ENCODE measurements at regions of chr11 and their contacts with region 1.

Region 1: DNA sequence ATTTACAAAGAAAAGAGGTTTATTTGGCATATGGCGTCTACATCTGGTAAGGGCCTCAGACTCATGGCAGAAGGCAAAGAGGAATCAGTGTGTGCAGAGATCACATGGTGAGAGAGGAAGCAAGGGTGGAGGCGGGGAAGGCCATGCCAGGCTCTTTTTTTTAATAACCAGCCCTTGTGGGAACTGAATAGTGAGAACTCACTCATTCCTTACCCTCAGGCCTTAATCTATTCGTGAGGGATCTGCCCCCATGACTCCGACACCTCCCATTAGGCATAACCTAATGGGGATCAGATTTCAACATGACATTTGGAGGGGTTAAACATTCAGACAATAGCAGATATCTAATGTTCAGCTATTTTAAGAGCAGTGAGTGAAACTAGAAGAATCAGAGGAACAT is 55.7 kb downstream of the ATM start:
- DNase-seq: no peak
- H3K4me3 ChIP-seq: no peak overlapping the region
- H3K4me3 Mint-ChIP-seq: peak overlapping the region in 2 of 8 donors; percentile 15 to 24
- H3K27ac ChIP-seq: no peak overlapping the region
- H3K27ac Mint-ChIP-seq: peak overlapping the region in 4 of 7 donors; percentile 2 to 86 (median 82)
- H3K4me1 ChIP-seq: peaks cover 13% of the 10 kb centered on the region
- H3K4me1 Mint-ChIP-seq: peaks cover 24 to 51% (median 28%) of the 10 kb centered on the region in 4 donors
- H3K27me3 ChIP-seq: no peaks in the 10 kb centered on the region
- H3K27me3 Mint-ChIP-seq: no peaks in the 10 kb centered on the region

Region 2: GRCh38 chr11:108307751-108308150 is 29.2 kb after region 1 on chr11:
- CTCF ChIA-PET with region 1: no interaction called
- POLR2A ChIA-PET with region 1: no interaction called
- intact Hi-C with region 1: loop called (anchors 5 kb)
- DNase-seq: no peak
- H3K4me3 ChIP-seq: no peak overlapping the region
- H3K4me3 Mint-ChIP-seq: no peak overlapping the region
- H3K27ac ChIP-seq: no peak overlapping the region
- H3K27ac Mint-ChIP-seq: peak overlapping the region in 3 of 7 donors; percentile 6 to 71 (median 30)
- H3K4me1 ChIP-seq: peaks cover 5% of the 10 kb centered on the region
- H3K4me1 Mint-ChIP-seq: peaks cover 10 to 24% (median 16%) of the 10 kb centered on the region in 4 donors
- H3K27me3 ChIP-seq: no peaks in the 10 kb centered on the region
- H3K27me3 Mint-ChIP-seq: no peaks in the 10 kb centered on the region

Region 3: DNA sequence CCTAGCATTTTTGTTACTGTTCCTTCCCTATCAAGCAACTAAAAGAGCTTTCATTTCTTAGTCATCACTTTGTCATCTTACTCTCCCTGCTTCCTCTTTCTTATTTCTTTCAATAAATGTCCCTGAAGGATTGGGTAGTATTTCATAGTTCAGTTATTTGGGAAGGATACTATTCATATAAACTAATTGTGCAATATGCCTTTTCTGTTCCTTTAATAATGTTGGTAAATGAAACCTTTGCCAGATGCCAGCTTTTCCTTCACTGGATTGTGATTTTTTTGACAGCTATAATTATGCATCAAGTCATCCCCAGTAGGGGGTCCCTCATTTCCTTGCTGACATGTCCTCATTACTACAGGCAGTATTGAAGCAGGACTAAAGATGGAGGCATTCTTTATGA is 46.0 kb after region 1 on chr11:
- CTCF ChIA-PET with region 1: no interaction called
- POLR2A ChIA-PET with region 1: no interaction called
- intact Hi-C with region 1: loop called (anchors 5 kb)
- DNase-seq: no peak
- H3K4me3 ChIP-seq: no peak overlapping the region
- H3K4me3 Mint-ChIP-seq: no peak overlapping the region
- H3K27ac ChIP-seq: no peak overlapping the region
- H3K27ac Mint-ChIP-seq: peak overlapping the region in 3 of 7 donors; percentile 17 to 53 (median 22)
- H3K4me1 ChIP-seq: no peaks in the 10 kb centered on the region
- H3K4me1 Mint-ChIP-seq: peaks cover under 1 to 4% (median 4%) of the 10 kb centered on the region in 4 donors
- H3K27me3 ChIP-seq: no peaks in the 10 kb centered on the region
- H3K27me3 Mint-ChIP-seq: no peaks in the 10 kb centered on the region